ENCODE measurements at regions of chr19 and their contacts with region 1.

Region 1: DNA sequence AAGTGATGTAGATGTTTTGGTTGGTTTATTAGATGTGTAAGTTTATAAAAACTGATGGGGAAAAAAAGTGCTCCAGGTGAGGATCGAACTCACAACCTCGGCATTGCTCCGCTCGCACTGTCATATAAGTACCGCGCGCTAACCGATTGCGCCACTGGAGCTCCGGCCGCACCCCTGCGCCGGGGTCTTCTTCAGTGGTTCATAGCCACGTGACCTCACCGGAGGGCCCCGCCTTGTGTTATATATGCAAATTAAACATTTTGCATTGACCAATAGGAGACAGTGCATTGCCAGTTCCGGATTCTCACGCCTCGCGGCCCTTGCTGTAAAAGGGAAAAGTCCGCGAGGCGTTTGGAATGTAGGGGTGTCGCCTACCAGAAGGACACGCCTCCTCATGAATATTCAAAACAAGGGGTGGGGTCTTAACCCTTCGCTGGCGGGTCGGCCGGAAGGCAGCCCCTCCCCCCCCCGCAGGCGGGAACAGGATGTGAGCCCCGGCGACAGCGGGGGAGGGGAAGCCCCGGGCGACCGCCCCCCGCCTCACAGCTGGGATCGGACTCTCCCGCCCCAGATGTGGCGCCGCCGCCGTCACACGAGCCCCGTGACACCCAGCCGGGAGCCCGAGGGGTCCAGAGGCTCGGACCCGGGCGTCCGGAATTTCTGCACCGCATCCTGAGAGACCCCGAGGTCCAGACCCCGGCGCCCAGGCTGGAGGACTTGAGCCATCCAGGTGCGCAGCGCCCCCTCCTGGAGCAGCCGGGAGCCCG is at the start of gene PLEKHG2:
- DNase-seq: peak; percentile 94 to 98
- ATAC-seq: peak; percentile 57 to 74 (median 72)
- H3K4me3 ChIP-seq: peak within 1 kb of the TSS; percentile 66 to 98 (median 86)
- H3K27ac ChIP-seq: peak within 1 kb of the TSS; percentile 94 to 100 (median 99)
- H3K4me1 ChIP-seq: peaks cover 11 to 71% (median 53%) of the 10 kb centered on the region in 9 donors
- H3K27me3 ChIP-seq: no peaks in the 10 kb centered on the region
- CTCF ChIP-seq: peak; percentile 68 to 93 (median 88)
- total RNA-seq, gene PLEKHG2: 8.3 to 23.1 (median 15.1) TPM

Region 2: DNA sequence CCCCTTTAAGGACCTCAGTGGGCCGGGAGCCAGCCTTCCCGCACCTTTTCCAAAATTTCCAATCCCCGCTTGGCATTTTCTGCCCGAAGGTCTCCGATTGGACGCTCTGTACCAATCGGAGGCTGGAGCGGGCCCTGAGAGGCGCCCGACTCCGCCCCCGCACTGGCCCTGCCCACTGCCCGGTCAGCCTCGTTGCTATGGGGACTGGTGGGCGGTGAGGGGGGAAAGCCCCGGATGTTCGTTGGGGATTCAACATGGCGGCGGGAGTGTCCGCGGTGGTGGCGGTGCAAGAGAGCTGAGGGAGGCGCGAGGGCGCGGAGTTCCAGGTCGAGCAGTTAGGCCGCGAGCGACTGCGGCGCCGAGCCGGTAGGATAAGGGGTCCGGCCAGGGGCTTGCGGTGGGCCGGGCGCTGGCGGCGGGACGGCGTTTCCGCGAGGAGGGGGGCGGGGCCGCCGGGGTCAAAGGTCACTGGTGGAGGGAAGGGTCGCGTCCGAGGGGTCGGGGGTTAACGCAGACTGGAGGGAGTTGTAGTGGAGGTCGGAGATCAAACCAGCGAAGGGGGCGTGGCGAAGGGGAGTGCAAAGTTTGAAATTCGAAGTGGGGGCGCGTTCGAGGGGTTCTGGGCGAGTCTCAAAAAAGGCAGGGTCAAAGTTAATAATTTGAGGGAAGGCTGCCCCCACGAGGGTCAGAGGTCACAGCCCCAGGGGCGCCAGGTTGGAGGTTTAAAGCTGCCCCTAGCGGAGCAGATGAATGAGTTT is 286.6 kb before region 1 on chr19 and contains the start of gene PAK4:
- intact Hi-C with region 1: loop called in 1 of 10 experiments (anchors 10 kb)
- DNase-seq: peak; percentile 96 to 98
- ATAC-seq: peak; percentile 99 to 100 (median 100)
- H3K4me3 ChIP-seq: peak within 1 kb of the TSS; percentile 45 to 85 (median 80)
- H3K27ac ChIP-seq: peak within 1 kb of the TSS in 9 of 10 donors; percentile 50 to 89 (median 83)
- H3K4me1 ChIP-seq: peaks cover 2 to 61% (median 31%) of the 10 kb centered on the region in 9 donors
- H3K27me3 ChIP-seq: peaks cover 0 to 11% (median 5%) of the 10 kb centered on the region in 7 donors
- CTCF ChIP-seq: no peak
- total RNA-seq, gene PAK4: 11.7 to 22.4 (median 16.1) TPM

Region 3: DNA sequence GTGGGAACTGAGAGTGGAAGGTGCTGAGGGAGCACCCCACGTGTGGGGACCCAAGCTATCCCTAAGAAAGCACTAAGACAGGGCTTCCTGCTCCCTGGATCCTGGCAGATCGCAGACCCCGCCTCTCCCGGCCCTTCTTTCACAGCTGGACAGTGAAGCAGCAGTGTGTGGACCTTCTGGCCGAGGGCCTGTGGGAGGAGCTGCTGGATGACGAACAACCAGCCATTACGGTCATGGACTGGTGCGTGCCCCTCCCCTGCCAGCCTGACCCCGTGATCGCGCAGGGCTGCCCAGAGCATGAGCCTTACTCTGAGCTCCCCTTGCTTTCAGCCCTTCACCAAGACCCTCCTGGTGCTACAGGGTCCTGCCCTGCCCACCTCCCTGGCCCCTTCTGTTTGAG is 213.3 kb before region 1 on chr19:
- intact Hi-C with region 1: no loop called
- DNase-seq: no peak
- ATAC-seq: peak in 3 of 8 donors; percentile 52 to 58 (median 56)
- H3K4me3 ChIP-seq: no peak overlapping the region
- H3K27ac ChIP-seq: no peak overlapping the region
- H3K4me1 ChIP-seq: peaks cover 0 to 5% (median 0%) of the 10 kb centered on the region in 9 donors
- H3K27me3 ChIP-seq: peaks cover 15 to 99% (median 97%) of the 10 kb centered on the region in 7 donors
- CTCF ChIP-seq: no peak

Region 4: GRCh38 chr19:39397360-39398296 is 14.7 kb before region 1 on chr19:
- intact Hi-C with region 1: loop called in 5 of 10 experiments (anchors 1 to 2 kb)
- DNase-seq: peak; percentile 88 to 93
- ATAC-seq: peak; percentile 77 to 87 (median 84)
- H3K4me3 ChIP-seq: peak overlapping the region in 3 of 10 donors; percentile 3 to 28 (median 21)
- H3K27ac ChIP-seq: peak overlapping the region; percentile 32 to 97 (median 78)
- H3K4me1 ChIP-seq: peaks cover 12 to 59% (median 31%) of the 10 kb centered on the region in 9 donors
- H3K27me3 ChIP-seq: no peaks in the 10 kb centered on the region
- CTCF ChIP-seq: peak; percentile 95 to 99 (median 98)

Region 5: DNA sequence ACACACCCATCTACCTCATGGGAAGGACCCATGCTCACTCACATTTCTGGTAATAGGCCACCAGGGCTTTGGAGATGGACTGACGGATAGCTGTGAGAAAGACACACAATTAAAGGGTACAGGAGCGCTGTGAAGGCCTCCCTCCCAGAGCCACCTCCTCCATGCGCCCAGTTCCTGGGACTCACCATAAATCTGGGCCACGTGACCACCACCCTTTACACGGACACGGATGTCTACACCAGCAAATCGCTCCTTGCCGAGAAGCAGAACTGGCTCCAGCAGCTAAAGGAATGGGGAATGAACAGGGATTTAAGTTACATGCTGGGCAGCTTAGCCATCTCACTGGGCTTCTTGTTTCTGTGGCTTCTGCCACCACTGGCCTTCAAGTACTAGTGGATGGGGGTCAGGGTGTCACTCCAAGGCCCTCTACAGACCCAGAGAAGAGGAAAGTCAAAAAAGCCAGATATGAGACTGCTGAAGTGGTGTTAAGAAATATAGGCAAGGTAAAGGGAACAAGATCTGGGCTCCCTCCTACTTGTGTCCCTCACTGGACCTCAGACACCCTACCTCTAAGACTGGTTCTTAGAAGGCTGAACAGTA is 21.3 kb after region 1 on chr19:
- intact Hi-C with region 1: loop called in 1 of 10 experiments (anchors 2 kb)
- DNase-seq: no peak
- ATAC-seq: no peak
- H3K4me3 ChIP-seq: peak overlapping the region in 2 of 10 donors; percentile 12 to 99
- H3K27ac ChIP-seq: peak overlapping the region in 3 of 10 donors; percentile 26 to 96 (median 84)
- H3K4me1 ChIP-seq: peaks cover 14 to 58% (median 38%) of the 10 kb centered on the region in 9 donors
- H3K27me3 ChIP-seq: peaks cover 0 to 6% (median 0%) of the 10 kb centered on the region in 7 donors
- CTCF ChIP-seq: no peak